ENCODE measurements at regions of chr2 and their contacts with region 1.

Region 1: GRCh38 chr2:233251306-233252116 is at the start of gene ATG16L1:
- DNase-seq: peak; percentile 91 to 93
- ATAC-seq: peak; percentile 97 to 98
- H3K4me3 ChIP-seq: peak within 1 kb of the TSS; percentile 89 to 99 (median 97)
- H3K27ac ChIP-seq: peak within 1 kb of the TSS; percentile 79 to 96 (median 94)
- H3K4me1 ChIP-seq: peaks cover 15 to 26% of the 10 kb centered on the region in 2 donors
- H3K27me3 ChIP-seq: no peaks in the 10 kb centered on the region
- CTCF ChIP-seq: peak; percentile 85 to 95 (median 87)
- POLR2A ChIP-seq: peak; percentile 49 to 74
- total RNA-seq, gene ATG16L1: 20.8 to 36.1 (median 35.9) TPM

Region 2: GRCh38 chr2:231780909-231781797 is 1470.4 kb before region 1 on chr2 and contains the start of gene PDE6D:
- in situ Hi-C with region 1: no loop called
- intact Hi-C with region 1: loop called (anchors 10 kb)
- DNase-seq: peak; percentile 97 to 99
- ATAC-seq: peak; percentile 98 to 99
- H3K4me3 ChIP-seq: peak within 1 kb of the TSS; percentile 75 to 99 (median 92)
- H3K27ac ChIP-seq: peak within 1 kb of the TSS; percentile 84 to 91 (median 90)
- H3K4me1 ChIP-seq: peaks cover 34 to 44% of the 10 kb centered on the region in 2 donors
- H3K27me3 ChIP-seq: no peaks in the 10 kb centered on the region
- CTCF ChIP-seq: no peak
- POLR2A ChIP-seq: peak; percentile 90 to 97
- total RNA-seq, gene PDE6D: 11.7 to 22.6 (median 17.6) TPM

Region 3: GRCh38 chr2:232600053-232600773 is 651.3 kb before region 1 on chr2:
- in situ Hi-C with region 1: loop called in 3 of 4 experiments (anchors 10 kb)
- intact Hi-C with region 1: no loop called
- DNase-seq: no peak
- ATAC-seq: no peak
- H3K4me3 ChIP-seq: no peak overlapping the region
- H3K27ac ChIP-seq: no peak overlapping the region
- H3K4me1 ChIP-seq: peaks cover 0 to 4% of the 10 kb centered on the region in 2 donors
- H3K27me3 ChIP-seq: no peaks in the 10 kb centered on the region
- CTCF ChIP-seq: no peak
- POLR2A ChIP-seq: no peak

Region 4: GRCh38 chr2:232697100-232697865 is 554.2 kb before region 1 on chr2 and contains the start of gene GIGYF2:
- in situ Hi-C with region 1: loop called in 1 of 4 experiments (anchors 10 kb)
- intact Hi-C with region 1: loop called (anchors 5 kb)
- DNase-seq: peak; percentile 62 to 97
- ATAC-seq: peak; percentile 93 to 95
- H3K4me3 ChIP-seq: peak within 1 kb of the TSS; percentile 81 to 99 (median 94)
- H3K27ac ChIP-seq: peak within 1 kb of the TSS; percentile 98 to 100 (median 99)
- H3K4me1 ChIP-seq: peaks cover 39 to 41% of the 10 kb centered on the region in 2 donors
- H3K27me3 ChIP-seq: no peaks in the 10 kb centered on the region
- CTCF ChIP-seq: peak in 3 of 5 experiments; percentile 9 to 41 (median 10)
- POLR2A ChIP-seq: peak; percentile 63 to 77
- total RNA-seq, gene GIGYF2: 55.7 to 87.8 (median 66.1) TPM

Region 5: DNA sequence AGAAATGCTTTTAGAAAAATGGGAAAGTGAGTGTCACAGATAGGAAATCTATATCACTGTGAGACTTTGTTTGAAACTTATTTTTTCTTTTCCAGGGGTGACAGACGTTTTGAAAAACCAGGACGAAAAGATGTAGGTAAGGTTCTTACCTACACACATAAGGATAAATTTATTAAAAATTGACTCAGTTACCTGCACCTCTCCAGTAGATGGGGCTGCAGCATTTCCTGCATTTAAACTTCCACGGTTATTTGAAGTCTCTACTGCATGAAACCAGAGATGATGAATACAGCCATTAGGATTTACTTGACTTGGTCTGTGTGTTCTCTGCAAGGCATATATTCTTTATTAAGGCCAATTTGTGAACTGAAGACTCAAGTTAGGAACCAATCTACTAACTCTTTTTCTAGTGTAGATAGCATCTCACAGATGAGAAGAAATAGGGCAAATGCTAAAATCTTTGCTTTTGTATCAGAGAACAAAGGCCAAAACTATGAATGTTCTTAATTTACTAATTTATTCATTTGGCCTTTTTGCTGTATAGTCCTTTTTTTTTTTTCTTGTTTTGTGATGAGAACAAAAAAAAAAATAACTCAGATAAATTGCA is 490.1 kb before region 1 on chr2:
- in situ Hi-C with region 1: no loop called
- intact Hi-C with region 1: loop called (anchors 5 kb)
- DNase-seq: no peak
- ATAC-seq: peak in 1 of 2 donors; percentile 55
- H3K4me3 ChIP-seq: no peak overlapping the region
- H3K27ac ChIP-seq: no peak overlapping the region
- H3K4me1 ChIP-seq: no peaks in the 10 kb centered on the region
- H3K27me3 ChIP-seq: no peaks in the 10 kb centered on the region
- CTCF ChIP-seq: peak in 2 of 5 experiments; percentile 14 to 36
- POLR2A ChIP-seq: no peak

Region 6: GRCh38 chr2:232854082-232854481 is 397.4 kb before region 1 on chr2:
- in situ Hi-C with region 1: loop called in 2 of 4 experiments (anchors 5 to 10 kb)
- intact Hi-C with region 1: loop called (anchors 1 kb)
- DNase-seq: no peak
- ATAC-seq: no peak
- H3K4me3 ChIP-seq: no peak overlapping the region
- H3K27ac ChIP-seq: peak overlapping the region; percentile 70 to 85 (median 80)
- H3K4me1 ChIP-seq: peaks cover 22 to 43% of the 10 kb centered on the region in 2 donors
- H3K27me3 ChIP-seq: no peaks in the 10 kb centered on the region
- CTCF ChIP-seq: no peak
- POLR2A ChIP-seq: no peak

Measured in gastrocnemius medialis (tissue), 4 donors.